ENCODE measurements at regions of chr17 and their contacts with region 1.

Region 1: DNA sequence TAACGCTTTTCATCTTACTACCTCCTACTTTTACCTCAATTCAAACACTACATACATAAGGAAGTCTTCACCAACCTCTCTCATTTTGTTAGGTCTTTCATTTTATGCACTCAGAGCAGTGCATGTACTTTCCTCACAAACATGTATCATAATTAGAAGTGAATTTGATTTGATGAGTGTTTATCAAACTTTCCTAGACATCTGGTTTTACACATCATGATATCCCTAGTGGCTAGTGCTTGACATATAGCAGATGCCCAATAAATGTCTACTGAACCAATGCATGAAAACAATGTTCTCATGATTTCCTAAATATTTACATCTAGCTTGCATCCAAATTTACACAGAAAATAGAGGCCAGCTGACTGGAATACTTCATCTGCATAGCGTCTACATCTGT is 323.4 kb upstream of the KIF2B start:
- DNase-seq: no peak
- H3K4me3 ChIP-seq: no peak overlapping the region
- CTCF ChIP-seq: no peak
- POLR2A ChIP-seq: no peak

Region 2: GRCh38 chr17:52957411-52957810 is 541.9 kb before region 1 on chr17:
- intact Hi-C with region 1: loop called (anchors 10 kb)
- DNase-seq: no peak
- H3K4me3 ChIP-seq: no peak overlapping the region
- CTCF ChIP-seq: no peak
- POLR2A ChIP-seq: no peak

Region 3: GRCh38 chr17:53133876-53134275 is 365.4 kb before region 1 on chr17:
- intact Hi-C with region 1: no loop called
- DNase-seq: no peak
- H3K4me3 ChIP-seq: no peak overlapping the region
- CTCF ChIP-seq: no peak
- POLR2A ChIP-seq: no peak

Region 4: DNA sequence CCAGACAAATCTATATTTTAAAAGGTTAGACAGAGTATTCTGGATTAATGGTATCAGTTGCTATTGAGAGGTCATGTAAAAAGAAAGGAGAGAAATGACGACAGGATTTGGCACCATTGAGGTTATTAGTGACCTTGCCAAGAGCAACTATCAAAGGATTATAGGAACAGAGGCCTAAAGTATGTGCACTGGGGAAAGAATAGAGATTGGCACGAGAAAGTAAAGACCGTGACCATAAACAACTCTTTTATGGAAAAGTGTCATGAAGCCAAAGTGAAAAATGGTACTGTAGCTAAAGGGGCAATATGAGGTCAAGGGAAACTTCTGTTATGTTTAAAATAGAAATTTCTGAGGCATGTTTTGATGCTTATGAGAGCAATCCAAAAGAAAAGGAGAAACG is 208.3 kb after region 1 on chr17:
- intact Hi-C with region 1: no loop called
- DNase-seq: no peak
- H3K4me3 ChIP-seq: no peak overlapping the region
- CTCF ChIP-seq: no peak
- POLR2A ChIP-seq: no peak

Measured in lower leg skin (tissue), 4 donors.